Breast epithelium (tissue), 4 donors: ENCODE measurements at regions of chr17 and their contacts with region 1.

Region 1: DNA sequence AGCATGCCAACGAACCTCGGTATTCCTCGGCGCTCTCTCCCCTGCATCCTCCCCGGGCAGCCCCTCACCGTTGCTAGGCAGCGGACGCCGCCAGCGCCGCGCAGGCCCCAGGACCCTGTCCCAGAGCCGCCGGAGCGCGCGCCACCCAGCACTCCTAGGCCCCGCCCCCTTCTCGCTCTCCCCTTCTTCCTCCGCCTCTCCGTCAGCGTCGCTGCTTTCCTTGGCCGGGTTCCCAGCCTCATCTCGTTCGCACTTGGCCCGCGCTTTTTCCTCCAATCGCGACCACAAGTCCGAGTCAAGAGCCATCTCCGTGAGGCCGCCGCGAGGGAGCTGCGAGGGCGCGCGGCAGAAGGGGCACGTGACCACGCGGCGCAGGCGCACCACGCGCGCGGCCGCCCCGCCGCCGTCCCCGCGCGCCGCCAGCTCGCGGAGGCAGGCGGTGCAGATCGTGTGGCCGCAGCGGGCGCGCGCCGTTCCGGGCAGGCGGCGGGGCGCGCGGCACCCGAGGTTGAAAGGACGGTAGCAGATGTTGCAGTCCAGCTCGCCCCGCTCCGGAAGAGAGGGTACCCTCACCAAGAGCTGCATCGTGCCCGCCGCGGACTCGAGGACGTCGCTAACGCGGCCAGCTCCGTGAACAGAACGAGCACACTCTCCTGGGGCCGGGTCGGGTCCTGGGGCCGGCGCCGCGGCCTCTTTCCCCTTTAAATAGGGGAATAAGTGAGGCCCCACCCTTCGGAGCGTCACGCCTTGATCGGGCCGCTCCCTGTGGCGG is at the start of gene RNF227:
- DNase-seq: peak; percentile 90 to 92
- H3K4me3 ChIP-seq: peak within 1 kb of the TSS; percentile 49 to 72 (median 71)
- H3K27ac ChIP-seq: peak within 1 kb of the TSS; percentile 97
- H3K4me1 ChIP-seq: peaks cover 0 to 5% of the 10 kb centered on the region in 2 donors
- H3K27me3 ChIP-seq: no peaks in the 10 kb centered on the region
- CTCF ChIP-seq: peak in 1 of 3 donors; percentile 11
- POLR2A ChIP-seq: no peak
- total RNA-seq, gene RNF227: 4.6 to 19.5 (median 8.6) TPM

Region 2: DNA sequence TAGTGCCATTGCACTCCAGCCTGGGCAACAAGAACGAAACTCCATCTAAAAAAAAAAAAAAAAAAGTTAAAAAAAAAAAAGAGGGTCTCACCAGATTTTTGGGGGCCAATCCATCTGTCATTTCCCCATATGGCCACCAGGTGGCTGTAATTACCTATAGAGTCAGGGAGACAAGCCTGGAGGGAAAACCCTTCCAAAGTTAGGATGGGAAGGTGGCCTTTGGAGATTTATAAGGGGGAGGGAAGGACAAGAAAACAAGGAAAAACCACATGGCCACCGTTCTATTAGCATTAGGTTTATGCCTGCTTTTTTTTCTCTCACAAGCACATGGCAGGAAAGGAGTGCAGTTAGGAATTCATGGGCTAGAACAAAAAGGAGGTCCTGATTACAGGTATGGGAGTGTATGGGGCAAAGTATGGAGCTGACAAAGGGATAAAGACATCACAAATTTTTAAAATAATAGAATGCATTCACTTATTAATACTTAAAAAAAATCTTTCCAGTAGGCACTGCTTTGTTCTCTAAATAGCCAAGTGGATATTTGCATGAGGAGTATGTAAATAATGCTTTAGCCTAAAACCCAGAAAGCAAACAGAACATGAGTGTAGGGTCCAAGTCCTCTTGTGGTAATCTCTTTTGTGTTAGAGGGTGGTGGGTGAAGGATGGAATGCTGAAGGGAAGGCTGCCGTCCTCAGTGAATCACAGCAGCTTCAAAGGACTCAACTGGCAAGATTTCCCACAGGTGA is 52.9 kb before region 1 on chr17:
- intact Hi-C with region 1: loop called (anchors 10 kb)
- DNase-seq: peak in 1 of 2 donors; percentile 45
- H3K4me3 ChIP-seq: no peak overlapping the region
- H3K27ac ChIP-seq: no peak overlapping the region
- H3K4me1 ChIP-seq: peaks cover 0 to 11% of the 10 kb centered on the region in 2 donors
- H3K27me3 ChIP-seq: no peaks in the 10 kb centered on the region
- CTCF ChIP-seq: peak; percentile 89 to 92 (median 91)
- POLR2A ChIP-seq: no peak